Activated T-helper 1 cell treated with anti-CD3 and anti-CD28 coated beads, Interleukin-12 subunit alpha, Interleukin-12 subunit beta, Interleukin-2, Interleukin-4 antibody, amounts not matched to agents 30 ng/mL and 10 ng/mL and 1 ng/mL, durations not matched to agents 14 hours and 24 hours and 36 hours (primary cell): ENCODE measurements at regions of chr16 and their contacts with region 1.

Region 1: DNA sequence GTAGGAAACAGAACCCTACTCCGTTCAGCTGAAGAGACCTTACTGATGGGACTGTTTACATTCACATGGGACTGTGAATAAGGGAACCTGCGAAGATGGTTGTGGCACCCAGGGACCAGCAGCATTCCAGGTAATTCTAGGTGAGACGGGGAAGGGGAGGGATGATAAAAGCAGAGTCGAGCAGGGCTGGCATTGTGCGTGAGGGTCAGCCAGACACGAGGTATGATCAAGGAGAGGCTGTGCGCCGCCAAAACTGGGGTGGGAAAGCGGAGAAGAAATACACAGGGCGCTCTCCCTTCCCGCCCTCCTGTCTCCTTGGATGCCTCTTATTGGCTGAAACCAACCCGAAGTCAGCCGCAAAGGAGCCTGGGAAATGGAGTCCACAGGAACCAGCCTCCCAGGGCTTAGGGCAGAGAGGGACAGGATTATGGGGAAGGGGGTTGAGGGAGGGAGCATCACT is 38.4 kb upstream of the CSNK2A2 start:
- DNase-seq: peak; percentile 52
- H3K4me3 Mint-ChIP-seq: peak overlapping the region; percentile 81
- H3K27ac Mint-ChIP-seq: no peak overlapping the region
- H3K4me1 Mint-ChIP-seq: peaks cover 13% of the 10 kb centered on the region
- H3K27me3 Mint-ChIP-seq: peaks cover 31% of the 10 kb centered on the region

Region 2: DNA sequence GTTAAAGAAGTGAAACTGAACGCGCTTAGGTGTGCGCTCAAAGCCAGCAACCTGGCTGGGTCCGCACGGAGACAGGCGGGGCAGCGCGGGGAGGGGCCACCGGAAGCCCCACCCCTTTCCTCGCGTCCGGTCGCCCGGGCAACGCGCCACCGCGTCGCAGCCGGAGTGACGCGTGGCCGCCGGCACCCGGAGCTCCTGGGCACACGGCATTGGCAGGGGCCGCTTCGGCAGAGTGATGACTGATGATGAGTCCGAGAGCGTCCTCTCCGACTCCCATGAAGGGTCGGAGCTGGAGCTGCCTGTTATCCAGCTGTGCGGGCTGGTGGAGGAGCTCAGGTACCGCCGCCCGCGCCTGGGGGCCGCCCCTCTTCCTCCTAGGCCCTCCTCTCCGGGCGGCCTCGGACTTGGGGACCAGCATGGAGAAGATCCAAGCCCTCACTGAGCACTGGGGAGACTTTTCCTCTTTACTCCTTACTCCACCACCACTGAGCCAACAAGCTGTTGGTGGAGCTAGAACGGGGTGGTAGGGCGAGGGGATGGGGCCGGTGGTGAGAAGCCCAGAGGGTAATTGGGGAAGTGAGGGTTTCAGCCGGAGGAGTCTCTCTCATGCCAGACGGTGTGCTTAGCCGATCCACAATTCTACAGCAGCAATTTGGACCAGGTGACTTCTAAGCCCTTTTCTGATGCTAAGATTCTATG is 13.7 kb after region 1 on chr16:
- intact Hi-C with region 1: loop called (anchors 1 kb)
- DNase-seq: peak; percentile 83
- H3K4me3 Mint-ChIP-seq: peak overlapping the region; percentile 86
- H3K27ac Mint-ChIP-seq: no peak overlapping the region
- H3K4me1 Mint-ChIP-seq: peaks cover 6% of the 10 kb centered on the region
- H3K27me3 Mint-ChIP-seq: peaks cover 4% of the 10 kb centered on the region

Region 3: DNA sequence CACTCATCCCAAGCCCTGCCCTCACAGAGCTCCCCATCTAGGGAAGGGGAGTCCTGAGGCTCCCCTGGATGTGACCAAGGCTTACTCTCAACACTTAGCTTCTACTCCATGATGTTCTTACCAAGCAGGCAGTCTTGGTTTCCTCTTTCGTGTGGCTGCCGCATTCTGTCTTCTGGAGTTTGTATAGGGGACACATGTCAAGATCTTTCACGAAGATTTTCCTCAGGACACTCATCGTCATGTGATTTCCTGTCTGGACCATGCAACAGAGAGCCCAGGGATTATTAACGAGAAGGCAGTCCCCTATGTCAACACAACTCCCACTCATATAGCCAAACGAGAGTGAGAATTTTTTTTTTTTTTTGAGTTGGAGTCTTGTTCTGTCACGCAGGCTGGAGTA is 48.2 kb after region 1 on chr16:
- intact Hi-C with region 1: no loop called
- DNase-seq: no peak
- H3K4me3 Mint-ChIP-seq: no peak overlapping the region
- H3K27ac Mint-ChIP-seq: no peak overlapping the region
- H3K4me1 Mint-ChIP-seq: no peaks in the 10 kb centered on the region
- H3K27me3 Mint-ChIP-seq: peaks cover 1% of the 10 kb centered on the region